ENCODE measurements at regions of chr1 and their contacts with region 1.

Region 1: DNA sequence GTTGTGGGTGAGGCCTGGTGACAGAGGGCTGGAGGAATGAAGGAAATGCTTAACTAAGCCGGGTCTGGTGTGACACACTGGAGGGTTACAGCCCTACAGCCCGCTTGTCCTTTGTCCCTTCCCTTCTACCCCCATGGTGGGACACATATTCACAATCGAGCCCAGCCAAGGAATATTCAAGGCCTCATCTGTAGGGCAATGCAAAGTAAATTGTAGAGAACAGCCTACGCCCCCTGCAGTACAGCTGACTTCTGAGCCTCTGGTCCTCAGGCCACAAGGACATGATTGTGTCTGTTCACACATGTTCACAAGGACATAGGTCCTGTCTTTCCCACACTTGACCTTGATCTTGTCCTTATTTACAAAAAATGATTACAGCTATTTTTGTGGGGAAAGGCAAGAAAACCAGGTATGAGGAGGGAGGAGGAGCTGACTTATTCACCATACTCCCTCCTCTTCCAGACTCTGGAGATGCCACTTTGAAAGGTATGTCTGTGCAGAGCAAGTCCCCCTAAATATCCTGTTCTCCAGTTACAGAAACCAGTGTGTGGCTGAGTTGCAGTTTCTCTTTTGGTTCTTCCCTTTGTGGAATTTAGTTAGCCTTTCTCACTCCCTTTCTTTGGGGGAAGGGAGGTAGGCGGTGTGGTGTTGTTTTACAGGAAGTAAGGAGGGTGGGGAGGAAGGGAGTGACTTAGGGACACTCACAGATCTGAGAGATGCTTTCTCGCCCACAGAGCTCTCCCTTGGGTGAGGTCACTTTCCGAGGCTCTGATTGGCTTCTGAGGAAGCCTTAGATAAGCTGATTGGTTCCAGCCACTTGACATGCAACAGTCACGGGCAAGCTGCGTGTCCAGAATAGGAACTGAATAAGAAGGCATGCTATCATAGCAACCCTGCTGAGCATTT is 14.6 kb downstream of the POLR3GL start:
- DNase-seq: peak; percentile 99
- H3K4me3 ChIP-seq: no peak overlapping the region
- H3K27ac ChIP-seq: peak overlapping the region; percentile 89
- H3K4me1 ChIP-seq: peaks cover 38% of the 10 kb centered on the region
- H3K27me3 ChIP-seq: no peaks in the 10 kb centered on the region
- CTCF ChIP-seq: peak; percentile 7 to 46

Region 2: DNA sequence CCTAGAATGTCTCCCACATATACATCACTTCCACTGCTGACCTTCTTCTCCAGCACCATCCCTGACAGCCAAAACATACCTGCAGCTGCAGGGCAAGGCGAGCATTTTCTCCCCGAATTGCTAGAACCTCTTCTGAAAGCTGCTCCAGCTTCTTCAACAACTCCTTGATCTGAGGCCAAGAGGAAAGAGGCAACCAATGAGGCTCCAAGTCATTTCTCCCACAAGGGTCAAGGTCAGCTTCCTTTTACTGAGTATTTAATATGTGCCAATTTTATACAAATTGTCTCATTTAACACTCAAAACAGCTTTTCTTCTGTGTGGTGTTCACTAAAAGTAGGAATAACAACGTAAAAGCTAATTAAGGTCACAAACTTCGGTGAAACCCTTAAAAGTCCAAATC is 110.9 kb before region 1 on chr1:
- CTCF ChIA-PET with region 1: no interaction called
- dilution Hi-C with region 1: no loop called
- in situ Hi-C with region 1: no loop called
- intact Hi-C with region 1: no loop called
- DNase-seq: no peak
- H3K4me3 ChIP-seq: no peak overlapping the region
- H3K27ac ChIP-seq: no peak overlapping the region
- H3K4me1 ChIP-seq: peaks cover 13% of the 10 kb centered on the region
- H3K27me3 ChIP-seq: no peaks in the 10 kb centered on the region
- CTCF ChIP-seq: no peak

Region 3: DNA sequence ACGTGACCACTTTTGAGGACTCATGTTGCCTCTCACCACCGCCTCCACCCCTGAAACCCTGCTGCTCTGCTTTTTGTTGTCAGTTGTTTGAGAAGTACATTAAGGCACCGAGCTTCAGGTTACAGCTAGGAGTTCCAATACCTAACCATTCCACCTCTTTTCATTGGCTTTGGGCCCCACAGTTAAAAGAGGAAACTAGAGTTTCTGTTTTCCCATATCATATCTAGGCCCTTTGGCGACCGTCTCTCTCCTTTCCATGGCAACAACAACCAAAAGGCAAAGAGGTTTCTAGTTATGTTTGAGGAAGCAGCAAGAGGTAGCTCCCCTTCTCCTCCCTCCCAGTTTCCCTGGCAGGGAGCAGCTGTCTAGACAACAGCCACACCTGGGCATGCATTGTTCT is 99.3 kb before region 1 on chr1:
- CTCF ChIA-PET with region 1: no interaction called
- dilution Hi-C with region 1: no loop called
- in situ Hi-C with region 1: no loop called
- intact Hi-C with region 1: no loop called
- DNase-seq: no peak
- H3K4me3 ChIP-seq: no peak overlapping the region
- H3K27ac ChIP-seq: no peak overlapping the region
- H3K4me1 ChIP-seq: peaks cover 9% of the 10 kb centered on the region
- H3K27me3 ChIP-seq: no peaks in the 10 kb centered on the region
- CTCF ChIP-seq: no peak

Region 4: DNA sequence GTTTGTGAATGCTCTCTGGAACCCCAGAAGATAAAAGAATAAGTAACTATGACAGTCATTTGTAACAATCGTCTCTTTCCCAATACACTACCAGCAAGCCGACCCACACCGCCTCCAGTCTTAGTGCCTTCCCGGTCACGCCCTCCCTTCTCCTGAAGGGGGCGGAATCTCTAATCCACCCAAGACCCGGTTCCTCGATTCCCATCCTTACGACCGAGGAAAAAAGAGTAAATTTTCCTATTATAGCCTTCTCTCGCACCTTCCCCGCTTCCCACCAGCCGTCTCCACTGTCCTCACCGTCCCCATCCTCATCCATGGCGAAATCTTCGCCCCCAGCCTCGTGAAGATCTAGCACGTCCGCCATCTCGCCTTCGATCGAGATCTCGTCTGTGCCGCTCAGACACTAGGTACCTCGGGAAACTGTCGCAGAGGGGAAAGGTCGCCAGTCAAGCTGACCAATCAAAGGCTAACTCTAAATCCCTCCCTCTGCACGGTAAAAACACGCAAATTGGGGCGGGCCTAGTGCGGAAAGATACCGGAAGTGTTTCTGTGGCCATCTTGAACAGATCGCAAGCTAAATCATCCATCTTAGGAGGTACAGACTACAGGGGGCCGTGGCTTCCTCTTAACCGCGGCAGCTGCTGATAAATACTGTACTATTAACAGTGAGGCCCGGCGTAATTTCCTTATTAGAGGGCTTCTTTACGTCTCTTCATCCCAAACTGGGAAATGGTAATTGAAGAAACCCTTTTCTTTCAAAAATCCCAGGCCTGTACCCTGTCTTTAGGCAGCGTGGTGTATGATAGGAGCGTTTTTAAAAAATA is 51.8 kb before region 1 on chr1 and contains the start of gene RBM8A:
- CTCF ChIA-PET with region 1: no interaction called
- dilution Hi-C with region 1: no loop called
- in situ Hi-C with region 1: no loop called
- intact Hi-C with region 1: loop called (anchors 1 kb)
- DNase-seq: peak; percentile 97
- H3K4me3 ChIP-seq: peak within 1 kb of the TSS; percentile 77 to 99 (median 80)
- H3K27ac ChIP-seq: peak within 1 kb of the TSS; percentile 94
- H3K4me1 ChIP-seq: peaks cover 3% of the 10 kb centered on the region
- H3K27me3 ChIP-seq: no peaks in the 10 kb centered on the region
- CTCF ChIP-seq: peak; percentile 60 to 61
- total RNA-seq, gene RBM8A: 80.2 to 172 TPM

Region 5: DNA sequence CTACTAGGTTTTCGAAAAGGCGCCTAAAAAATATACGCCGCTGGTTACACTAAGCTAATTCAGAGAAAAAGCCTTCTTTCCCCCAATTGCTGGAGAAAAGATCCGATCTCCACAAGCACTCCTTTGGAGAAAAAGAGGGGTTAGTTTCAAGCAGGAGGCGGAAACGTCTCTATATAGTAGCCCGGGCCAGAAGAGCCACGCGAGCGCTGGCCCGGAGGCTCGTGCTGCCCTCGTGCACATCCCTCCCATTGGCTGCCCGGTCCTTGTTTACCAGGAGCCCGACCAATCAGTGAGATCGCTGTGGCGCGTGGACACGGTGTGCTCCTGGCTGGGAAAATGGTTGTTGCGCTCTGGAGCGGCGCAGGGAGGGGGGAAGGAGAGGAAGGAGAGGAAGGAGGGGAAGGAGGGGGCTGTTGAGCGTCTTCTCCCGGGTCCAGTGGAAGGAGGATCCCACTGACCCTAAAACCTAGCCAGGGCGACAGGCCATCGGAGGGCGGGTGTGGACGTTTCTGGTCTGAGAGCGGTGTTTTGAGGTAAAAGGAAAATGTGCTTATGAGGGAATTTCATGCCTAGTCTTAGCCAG is 17.4 kb after region 1 on chr1 and contains the start of gene TXNIP:
- CTCF ChIA-PET with region 1: interaction called, 6 read pairs
- dilution Hi-C with region 1: no loop called
- in situ Hi-C with region 1: no loop called
- intact Hi-C with region 1: loop called (anchors 1 kb)
- DNase-seq: peak; percentile 93
- H3K4me3 ChIP-seq: peak within 1 kb of the TSS; percentile 58 to 84 (median 81)
- H3K27ac ChIP-seq: peak within 1 kb of the TSS; percentile 71
- H3K4me1 ChIP-seq: peaks cover 36% of the 10 kb centered on the region
- H3K27me3 ChIP-seq: no peaks in the 10 kb centered on the region
- CTCF ChIP-seq: no peak
- total RNA-seq, gene TXNIP: 92.8 to 355 TPM

Region 6: DNA sequence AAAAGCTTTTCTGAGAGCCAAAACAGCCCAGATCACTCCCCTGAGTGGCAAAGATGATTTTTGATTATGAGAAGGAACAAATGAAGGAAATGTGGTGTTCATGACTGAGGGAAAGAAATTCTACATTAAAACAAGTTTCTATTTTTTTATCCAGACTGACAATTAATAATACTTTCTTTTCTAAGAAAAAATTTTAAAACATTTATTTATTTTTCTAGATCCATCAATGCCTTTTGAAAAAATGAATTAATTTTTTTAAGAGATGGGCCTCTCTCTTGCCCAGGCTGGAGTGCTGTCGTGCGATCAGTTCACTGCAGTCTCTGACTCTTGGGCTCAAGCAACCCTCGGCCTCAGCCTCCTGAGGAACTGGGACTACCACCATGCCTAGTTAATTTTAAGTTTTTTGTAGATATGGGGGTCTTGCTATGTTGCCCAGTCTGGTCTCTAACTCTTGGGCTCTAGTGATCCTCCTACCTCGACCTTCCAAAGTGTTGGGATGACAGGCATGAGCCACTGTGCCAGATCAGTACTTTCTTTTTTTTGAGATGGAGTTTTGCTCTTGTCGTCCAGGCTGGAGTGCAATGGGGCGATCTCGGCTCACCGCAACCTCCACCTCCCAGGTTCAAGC is 28.5 kb after region 1 on chr1:
- CTCF ChIA-PET with region 1: interaction called, 9 read pairs
- dilution Hi-C with region 1: no loop called
- in situ Hi-C with region 1: loop called (anchors 5 kb)
- intact Hi-C with region 1: loop called (anchors 1 kb)
- DNase-seq: no peak
- H3K4me3 ChIP-seq: no peak overlapping the region
- H3K27ac ChIP-seq: no peak overlapping the region
- H3K4me1 ChIP-seq: peaks cover 3% of the 10 kb centered on the region
- H3K27me3 ChIP-seq: no peaks in the 10 kb centered on the region
- CTCF ChIP-seq: no peak

Region 7: DNA sequence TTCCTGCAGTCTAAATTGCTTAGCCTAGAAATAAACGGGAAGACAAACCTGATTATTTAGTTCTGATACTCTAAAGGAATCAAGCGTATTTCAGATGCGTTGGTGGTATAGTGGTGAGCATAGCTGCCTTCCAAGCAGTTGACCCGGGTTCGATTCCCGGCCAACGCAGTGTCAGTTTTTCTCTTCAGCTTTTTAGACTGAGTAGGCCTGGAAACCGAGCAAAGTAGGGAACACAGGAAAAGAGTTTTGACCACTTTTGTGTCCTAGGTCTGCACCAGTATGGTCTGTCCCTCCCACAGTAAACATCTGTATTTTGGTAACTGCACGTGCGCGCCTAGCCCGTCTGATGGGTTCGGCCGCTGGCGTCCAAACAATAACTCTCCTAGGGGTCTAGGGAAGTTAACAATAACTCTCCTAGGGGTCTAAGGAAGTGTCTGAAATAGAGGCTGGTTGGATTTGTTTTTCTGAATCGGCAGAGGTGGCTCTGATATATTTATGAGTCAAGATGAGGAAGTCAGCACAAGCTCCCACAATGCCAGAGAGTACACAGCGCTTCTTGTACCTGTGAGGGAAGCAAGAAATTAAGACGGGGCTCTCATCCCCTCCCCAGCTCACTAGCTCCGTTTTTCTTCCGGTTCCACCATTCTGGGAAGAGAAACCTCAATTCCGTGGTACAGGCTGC is 58.0 kb after region 1 on chr1:
- CTCF ChIA-PET with region 1: no interaction called
- dilution Hi-C with region 1: no loop called
- in situ Hi-C with region 1: no loop called
- intact Hi-C with region 1: loop called (anchors 2 kb)
- DNase-seq: peak; percentile 81
- H3K4me3 ChIP-seq: peak overlapping the region; percentile 65 to 81 (median 68)
- H3K27ac ChIP-seq: peak overlapping the region; percentile 63
- H3K4me1 ChIP-seq: no peaks in the 10 kb centered on the region
- H3K27me3 ChIP-seq: no peaks in the 10 kb centered on the region
- CTCF ChIP-seq: no peak